Tibial artery (tissue), 4 donors: ENCODE measurements at regions of chr5 and their contacts with region 1.

Region 1: GRCh38 chr5:171907725-171908343 is 98.6 kb downstream of the FBXW11 start:
- DNase-seq: peak in 1 of 2 donors; percentile 32
- H3K4me3 ChIP-seq: no peak overlapping the region
- H3K27ac ChIP-seq: no peak overlapping the region
- H3K4me1 ChIP-seq: peaks cover 0 to 25% (median 5%) of the 10 kb centered on the region in 4 donors
- H3K27me3 ChIP-seq: no peaks in the 10 kb centered on the region
- CTCF ChIP-seq: peak; percentile 78 to 80

Region 2: DNA sequence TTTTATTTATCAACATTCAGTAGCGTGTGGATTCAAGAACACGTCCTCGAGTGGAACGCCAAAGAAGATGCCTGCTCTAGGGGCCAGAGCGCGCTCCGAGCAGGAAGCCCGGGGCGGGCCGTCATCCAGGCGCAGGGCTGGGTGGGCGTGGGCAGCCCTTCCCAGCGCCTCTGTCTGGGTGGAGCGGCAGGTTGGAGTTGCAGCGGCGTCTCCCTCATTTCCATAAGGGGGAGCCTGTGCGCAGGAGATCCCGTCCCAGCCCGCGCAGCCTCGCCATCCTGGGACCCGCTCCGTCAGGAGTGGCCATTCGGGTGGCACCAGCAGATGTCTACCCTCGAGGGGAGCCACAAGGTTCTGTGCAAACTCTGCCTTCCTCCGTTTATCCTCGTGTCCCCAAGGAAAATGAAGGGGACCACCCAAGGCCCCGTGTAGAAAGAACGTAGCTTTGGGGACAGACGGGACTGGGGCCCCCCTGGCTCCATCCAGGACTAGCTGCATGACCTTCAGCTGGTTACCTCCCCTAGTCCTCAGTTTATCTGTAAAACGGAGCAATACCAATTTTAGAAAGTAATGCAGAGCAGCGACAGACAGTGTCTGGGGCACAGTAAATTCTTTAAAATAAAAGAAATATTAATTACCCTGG is 277.7 kb before region 1 on chr5:
- intact Hi-C with region 1: loop called (anchors 5 kb)
- DNase-seq: peak in 1 of 2 donors; percentile 32
- H3K4me3 ChIP-seq: peak overlapping the region in 1 of 2 donors; percentile 36
- H3K27ac ChIP-seq: no peak overlapping the region
- H3K4me1 ChIP-seq: peaks cover 0 to 7% (median 6%) of the 10 kb centered on the region in 4 donors
- H3K27me3 ChIP-seq: peaks cover 0 to 21% of the 10 kb centered on the region in 2 donors
- CTCF ChIP-seq: peak; percentile 30 to 48

Region 3: DNA sequence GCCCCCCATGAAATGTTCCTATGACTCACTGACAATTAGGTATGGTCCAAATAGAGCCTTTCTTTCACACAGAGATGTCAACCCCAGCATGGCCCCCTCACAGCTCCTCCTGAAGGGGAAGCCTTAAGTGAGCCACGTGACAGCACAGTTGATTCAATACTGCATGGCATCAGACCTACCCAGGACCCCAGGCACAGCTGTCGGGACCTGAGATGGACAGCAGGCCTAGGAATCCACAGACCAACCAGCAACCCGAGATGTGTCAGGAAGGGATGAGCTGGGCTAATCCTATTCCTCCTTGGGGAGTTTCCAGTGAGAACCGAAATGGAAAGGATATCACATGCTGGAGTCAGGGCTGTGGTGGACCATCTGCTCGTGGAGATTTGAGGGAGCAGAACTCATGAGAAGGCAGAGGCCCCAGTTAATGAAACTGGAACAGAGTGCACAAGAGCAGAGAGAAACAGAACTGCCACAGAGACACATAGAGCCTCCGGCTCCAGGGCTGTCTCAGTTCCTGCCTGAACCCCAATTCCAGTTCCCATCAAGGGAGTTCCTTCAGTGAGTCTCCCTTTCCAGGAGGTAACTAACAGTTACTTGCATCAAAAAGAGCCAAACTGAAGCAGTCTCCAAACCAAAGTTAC is 164.3 kb before region 1 on chr5:
- intact Hi-C with region 1: loop called (anchors 10 kb)
- DNase-seq: peak in 1 of 2 donors; percentile 38
- H3K4me3 ChIP-seq: no peak overlapping the region
- H3K27ac ChIP-seq: no peak overlapping the region
- H3K4me1 ChIP-seq: peaks cover 0 to 19% (median 0%) of the 10 kb centered on the region in 4 donors
- H3K27me3 ChIP-seq: no peaks in the 10 kb centered on the region
- CTCF ChIP-seq: no peak

Region 4: DNA sequence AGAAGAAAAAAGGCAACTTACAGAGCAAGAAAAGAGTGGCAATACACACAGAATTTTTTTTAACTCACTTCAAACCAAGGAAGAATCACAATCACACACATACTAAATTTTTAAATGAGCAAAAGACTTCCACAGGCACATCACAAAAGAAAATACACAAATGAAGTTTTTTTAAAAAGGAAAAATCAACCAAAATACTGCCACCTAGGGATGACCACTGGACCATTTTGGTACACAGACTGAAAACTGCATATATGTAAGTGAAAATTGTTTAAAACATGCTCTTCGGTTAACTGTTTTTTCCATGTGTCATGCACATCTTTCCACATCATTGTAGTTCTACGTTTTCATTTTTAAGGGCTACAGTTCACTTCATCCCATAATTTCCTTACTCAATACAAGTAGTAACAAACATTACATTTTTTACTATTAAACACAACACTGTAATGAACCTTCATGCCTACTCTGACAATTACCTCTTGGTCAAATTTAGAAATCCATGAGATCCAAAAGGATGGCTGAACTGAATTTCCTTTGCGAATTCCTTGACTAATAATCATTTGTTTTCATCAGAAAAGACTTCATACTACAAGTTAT is 19.6 kb after region 1 on chr5:
- intact Hi-C with region 1: no loop called
- DNase-seq: no peak
- H3K4me3 ChIP-seq: no peak overlapping the region
- H3K27ac ChIP-seq: no peak overlapping the region
- H3K4me1 ChIP-seq: peaks cover 0 to 9% (median 1%) of the 10 kb centered on the region in 4 donors
- H3K27me3 ChIP-seq: no peaks in the 10 kb centered on the region
- CTCF ChIP-seq: no peak